Posterior vena cava (tissue), 2 donors: ENCODE measurements at regions of chr3 and their contacts with region 1.

Region 1: DNA sequence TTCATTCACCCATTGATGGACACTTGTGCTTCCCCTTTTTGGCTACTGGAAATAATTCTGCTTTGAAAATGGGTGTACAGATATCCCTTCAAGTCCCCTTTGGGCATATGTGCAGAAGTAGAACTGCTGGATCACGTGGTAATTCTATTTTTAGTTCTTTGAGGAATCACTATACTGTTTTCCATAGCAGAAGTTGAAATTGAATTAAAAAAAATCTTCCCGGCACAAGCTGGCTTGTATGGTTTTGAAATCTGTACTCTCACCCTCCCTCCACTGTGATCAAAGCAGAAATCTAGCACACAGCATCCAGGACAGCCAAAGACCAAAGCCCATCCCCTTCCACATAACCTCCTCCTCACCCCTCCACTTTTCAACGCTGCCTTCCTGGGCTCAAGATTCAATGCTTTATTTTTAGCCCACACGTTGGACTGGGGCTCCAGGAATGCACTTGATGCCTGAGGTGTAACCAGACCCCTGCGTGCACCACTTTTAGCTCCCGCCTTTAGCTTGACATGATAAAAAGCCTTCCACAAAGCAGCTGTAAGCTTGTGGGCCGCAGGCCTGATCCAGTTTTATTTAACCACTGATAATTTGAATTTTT is 29.9 kb downstream of the TMEM40 start:
- DNase-seq: no peak

Region 2: DNA sequence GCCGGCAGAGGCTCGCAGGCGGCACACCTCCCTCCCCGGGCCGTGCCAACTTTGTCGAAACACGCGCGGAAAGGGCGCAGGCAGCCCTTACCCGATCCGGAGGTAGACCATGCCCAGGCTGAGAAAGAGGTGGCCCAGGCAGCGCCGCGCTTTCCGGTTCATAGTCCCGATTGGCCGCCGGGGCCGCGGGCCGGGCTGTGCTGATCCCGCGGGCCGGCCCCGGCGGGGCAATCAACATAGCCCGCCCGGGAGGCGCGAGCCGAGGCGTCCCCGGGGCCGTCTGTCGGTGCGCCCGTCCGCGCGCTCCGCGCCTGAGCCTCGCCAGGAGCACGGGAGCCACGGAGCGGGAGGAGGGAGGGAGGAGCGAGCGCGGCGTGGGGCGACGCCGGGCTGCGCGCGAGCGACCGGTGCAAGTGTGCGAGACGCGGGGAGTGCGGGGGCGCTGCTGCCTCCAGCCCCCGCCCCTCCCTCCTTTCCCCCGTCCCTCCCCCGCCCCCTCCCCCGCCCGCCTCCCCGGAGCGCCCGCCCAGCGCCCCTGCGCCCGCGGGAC is 1150.6 kb after region 1 on chr3 and contains the start of gene WNT7A:
- intact Hi-C with region 1: loop called in 1 of 2 experiments (anchors 5 kb)
- DNase-seq: peak; percentile 73
- total RNA-seq, gene WNT7A: not detected